BJ (cell line): ENCODE measurements at regions of chr19 and their contacts with region 1.

Region 1: DNA sequence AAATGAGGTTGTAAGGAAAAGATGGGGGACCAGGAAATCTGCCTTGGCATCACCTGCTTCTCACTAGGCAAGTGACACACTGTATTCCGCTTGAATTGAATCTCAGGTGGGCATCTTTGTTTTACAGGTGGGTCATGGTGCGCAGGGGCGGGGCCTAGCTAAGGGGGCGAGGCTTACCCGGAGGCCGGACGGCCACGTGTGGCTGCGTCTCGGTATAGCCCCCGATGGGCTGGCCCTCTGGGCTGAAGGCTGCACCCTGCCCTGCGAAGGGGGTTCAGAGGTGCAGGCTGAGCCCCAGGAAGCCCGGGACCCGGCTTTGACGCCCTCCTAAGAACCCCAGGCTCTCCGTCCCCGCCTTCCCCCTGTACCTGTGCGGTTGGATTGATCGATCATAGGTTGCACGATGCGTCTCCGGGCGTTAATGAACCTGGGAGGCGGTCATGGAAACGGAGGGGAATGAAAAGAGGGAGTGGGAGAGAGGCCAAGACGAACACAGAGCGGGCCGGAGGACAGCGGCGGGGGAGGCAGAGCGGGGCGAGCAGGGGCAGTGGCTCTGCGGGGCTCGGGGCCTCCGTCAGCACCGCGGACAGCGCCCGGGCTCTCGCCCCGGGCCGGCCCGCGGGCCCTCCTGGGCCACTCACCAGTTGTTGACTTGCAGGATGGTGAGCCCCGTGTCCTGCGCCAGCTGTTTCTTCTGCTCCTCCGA is 12.5 kb downstream of the MEIS3 start:
- DNase-seq: no peak
- H3K4me3 ChIP-seq: no peak overlapping the region
- H3K27me3 ChIP-seq: no peaks in the 10 kb centered on the region
- CTCF ChIP-seq: no peak

Region 2: GRCh38 chr19:47225746-47226425 is 181.0 kb before region 1 on chr19:
- CTCF ChIA-PET with region 1: no interaction called
- POLR2A ChIA-PET with region 1: interaction called, 21 read pairs
- DNase-seq: no peak
- H3K4me3 ChIP-seq: peak overlapping the region; percentile 77
- H3K27me3 ChIP-seq: no peaks in the 10 kb centered on the region
- CTCF ChIP-seq: 0 out of 2 replicates have a peak, but pooled peaks have one; percentile 6